ENCODE measurements at regions of chr17 and their contacts with region 1.

Region 1: GRCh38 chr17:10198509-10199253 is at the start of gene GAS7:
- DNase-seq: peak in 6 of 9 donors; percentile 7 to 27 (median 19)
- ATAC-seq: peak; percentile 71
- H3K4me3 ChIP-seq: no peak within 1 kb of the TSS
- H3K4me3 Mint-ChIP-seq: peak within 1 kb of the TSS; percentile 46 to 79 (median 72)
- H3K27ac ChIP-seq: no peak within 1 kb of the TSS
- H3K27ac Mint-ChIP-seq: peak within 1 kb of the TSS in 2 of 9 donors; percentile 2 to 57
- H3K4me1 ChIP-seq: peaks cover 0 to 3% of the 10 kb centered on the region in 2 donors
- H3K4me1 Mint-ChIP-seq: peaks cover 0 to 10% (median 8%) of the 10 kb centered on the region in 7 donors
- H3K27me3 ChIP-seq: no peaks in the 10 kb centered on the region
- H3K27me3 Mint-ChIP-seq: peaks cover 22 to 43% (median 31%) of the 10 kb centered on the region in 5 donors
- total RNA-seq, gene GAS7: 0.24 to 54.3 (median 3.4) TPM

Region 2: DNA sequence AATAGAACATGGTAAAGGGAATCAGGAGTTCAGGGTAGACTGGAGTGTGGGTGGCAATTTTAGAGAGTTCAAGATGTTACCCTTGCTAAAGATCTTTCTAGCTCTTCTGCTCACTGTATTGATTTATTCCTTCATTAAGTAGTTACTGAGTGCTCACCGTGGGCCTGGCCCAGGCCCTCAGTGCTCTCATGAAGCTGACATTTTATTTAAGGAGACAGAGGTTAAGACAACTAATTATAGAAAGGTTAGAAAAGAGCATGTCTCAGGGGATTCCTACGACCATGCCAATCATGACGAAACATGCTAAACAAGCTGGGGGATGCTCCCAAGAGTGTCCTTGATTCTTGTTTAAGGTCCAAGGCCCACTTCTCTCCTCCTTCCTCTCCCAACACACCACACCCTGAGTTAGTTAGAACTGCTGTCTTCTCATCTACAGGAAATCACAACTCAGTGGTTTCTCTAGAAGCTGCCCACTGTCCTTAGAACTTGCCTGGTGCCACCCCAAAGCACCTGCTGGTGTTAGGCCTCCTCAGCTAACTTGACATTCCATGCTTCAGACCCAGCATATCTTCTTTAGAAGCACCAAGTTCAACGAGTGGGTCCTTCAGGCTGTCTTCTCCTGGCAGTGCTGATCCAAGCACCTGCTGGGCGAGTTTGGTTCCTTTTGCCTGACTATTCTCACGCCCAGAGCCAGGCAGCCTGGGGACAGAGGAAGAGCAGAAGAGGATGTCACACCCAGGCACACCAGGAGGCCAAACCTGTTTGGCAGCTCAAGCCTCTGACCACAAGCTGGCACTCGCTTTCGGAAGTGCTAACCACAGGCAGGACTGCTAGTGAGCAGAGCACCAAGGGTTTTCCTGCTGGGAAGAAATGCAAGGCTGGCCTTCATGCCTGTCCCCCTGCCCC is 79.2 kb before region 1 on chr17:
- CTCF ChIA-PET with region 1: no interaction called
- POLR2A ChIA-PET with region 1: no interaction called
- intact Hi-C with region 1: no loop called
- DNase-seq: no peak
- ATAC-seq: peak; percentile 13
- H3K4me3 ChIP-seq: no peak overlapping the region
- H3K4me3 Mint-ChIP-seq: peak overlapping the region in 5 of 10 donors; percentile 3 to 65 (median 40)
- H3K27ac ChIP-seq: no peak overlapping the region
- H3K27ac Mint-ChIP-seq: peak overlapping the region in 7 of 9 donors; percentile 23 to 85 (median 66)
- H3K4me1 ChIP-seq: peaks cover 9 to 72% of the 10 kb centered on the region in 2 donors
- H3K4me1 Mint-ChIP-seq: peaks cover 5 to 76% (median 44%) of the 10 kb centered on the region in 7 donors
- H3K27me3 ChIP-seq: no peaks in the 10 kb centered on the region
- H3K27me3 Mint-ChIP-seq: peaks cover 0 to 46% (median 10%) of the 10 kb centered on the region in 5 donors

Region 3: GRCh38 chr17:10149573-10150399 is 48.9 kb before region 1 on chr17:
- CTCF ChIA-PET with region 1: no interaction called
- POLR2A ChIA-PET with region 1: no interaction called
- intact Hi-C with region 1: loop called in 1 of 2 experiments (anchors 2 kb)
- DNase-seq: no peak
- ATAC-seq: peak; percentile 62
- H3K4me3 ChIP-seq: no peak overlapping the region
- H3K4me3 Mint-ChIP-seq: peak overlapping the region in 1 of 10 donors; percentile 41
- H3K27ac ChIP-seq: no peak overlapping the region
- H3K27ac Mint-ChIP-seq: peak overlapping the region in 2 of 9 donors; percentile 12 to 50
- H3K4me1 ChIP-seq: peaks cover 0 to 11% of the 10 kb centered on the region in 2 donors
- H3K4me1 Mint-ChIP-seq: peaks cover 0 to 29% (median 17%) of the 10 kb centered on the region in 7 donors
- H3K27me3 ChIP-seq: no peaks in the 10 kb centered on the region
- H3K27me3 Mint-ChIP-seq: peaks cover 0 to 18% (median 0%) of the 10 kb centered on the region in 5 donors

Measured in naive thymus-derived CD4-positive, alpha-beta T cell (primary cell).